ENCODE measurements at regions of chr1 and their contacts with region 1.

Region 1: GRCh38 chr1:22611530-22611947 is 24.9 kb upstream of the C1QA start:
- DNase-seq: no peak
- H3K4me3 ChIP-seq: no peak overlapping the region
- H3K27ac ChIP-seq: no peak overlapping the region
- H3K4me1 ChIP-seq: no peaks in the 10 kb centered on the region
- H3K27me3 ChIP-seq: no peaks in the 10 kb centered on the region
- CTCF ChIP-seq: no peak
- POLR2A ChIP-seq: no peak

Region 2: DNA sequence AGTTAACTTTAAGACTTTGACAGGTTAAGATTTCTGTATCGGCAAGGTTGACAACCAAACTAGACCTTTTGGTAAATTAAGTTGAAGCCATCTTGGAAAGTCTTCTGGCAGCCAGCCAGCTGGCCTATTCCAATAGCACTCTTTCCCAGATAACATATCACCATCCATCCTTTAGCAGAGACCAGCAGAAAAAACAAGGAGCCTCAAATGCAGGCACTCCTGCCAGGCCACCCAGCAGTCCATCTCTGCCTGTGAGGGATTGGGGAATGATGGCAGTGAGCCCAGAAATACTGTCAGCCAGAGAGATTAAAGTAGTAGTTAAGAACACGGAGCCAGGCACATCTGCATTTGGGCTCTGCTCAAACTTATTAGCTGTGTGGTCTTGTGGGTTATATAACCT is 140.5 kb before region 1 on chr1:
- intact Hi-C with region 1: no loop called
- DNase-seq: no peak
- H3K4me3 ChIP-seq: no peak overlapping the region
- H3K27ac ChIP-seq: no peak overlapping the region
- H3K4me1 ChIP-seq: peaks cover 32% of the 10 kb centered on the region
- H3K27me3 ChIP-seq: no peaks in the 10 kb centered on the region
- CTCF ChIP-seq: no peak
- POLR2A ChIP-seq: no peak

Region 3: DNA sequence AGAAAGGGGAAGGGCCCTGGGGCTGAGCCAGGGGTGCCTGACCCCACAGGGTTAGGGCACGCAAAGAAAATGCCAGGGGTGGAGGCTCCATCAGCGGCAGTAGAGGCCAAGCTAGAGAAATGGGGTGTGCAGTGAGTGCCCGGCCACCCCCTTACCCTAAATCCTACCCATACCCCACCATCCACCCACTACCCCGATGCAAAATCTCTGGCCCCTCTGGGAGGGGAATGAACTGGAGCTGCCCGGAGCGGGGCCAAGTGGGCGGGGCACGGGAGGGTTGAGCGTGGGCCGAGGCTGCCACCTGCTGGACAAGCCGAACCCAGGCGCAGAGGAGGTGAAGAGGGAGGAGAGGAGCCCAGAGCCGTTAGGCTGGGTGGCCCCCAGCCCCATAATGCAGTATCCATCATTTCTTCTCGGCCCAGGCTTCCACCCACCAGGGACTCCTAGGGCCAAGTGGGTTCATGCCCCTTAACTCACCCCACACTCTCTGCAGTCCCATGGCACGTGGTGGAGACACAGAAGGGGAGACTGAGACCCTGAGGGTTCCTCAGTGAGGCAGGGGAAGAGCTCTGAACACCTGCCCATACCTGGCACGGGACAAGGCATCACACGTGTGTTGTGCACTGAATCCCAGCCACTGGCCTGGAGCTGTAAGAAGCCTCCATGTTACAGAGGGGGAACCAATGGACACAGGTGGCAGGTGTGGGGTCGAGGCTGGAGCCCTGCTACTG is 30.5 kb after region 1 on chr1:
- intact Hi-C with region 1: no loop called
- DNase-seq: no peak
- H3K4me3 ChIP-seq: peak overlapping the region in 1 of 2 donors; percentile 18
- H3K27ac ChIP-seq: no peak overlapping the region
- H3K4me1 ChIP-seq: no peaks in the 10 kb centered on the region
- H3K27me3 ChIP-seq: no peaks in the 10 kb centered on the region
- CTCF ChIP-seq: peak; percentile 78 to 90 (median 79)
- POLR2A ChIP-seq: no peak

Region 4: GRCh38 chr1:23209770-23210169 is 598.2 kb after region 1 on chr1:
- intact Hi-C with region 1: loop called (anchors 5 kb)
- DNase-seq: no peak
- H3K4me3 ChIP-seq: no peak overlapping the region
- H3K27ac ChIP-seq: no peak overlapping the region
- H3K4me1 ChIP-seq: no peaks in the 10 kb centered on the region
- H3K27me3 ChIP-seq: no peaks in the 10 kb centered on the region
- CTCF ChIP-seq: no peak
- POLR2A ChIP-seq: no peak